Natural killer cell (primary cell): ENCODE measurements at regions of chr13 and their contacts with region 1.

Region 1: GRCh38 chr13:22717036-22717435 is 463.7 kb upstream of the SGCG start:
- DNase-seq: no peak
- ATAC-seq: no peak
- H3K4me3 ChIP-seq: no peak overlapping the region
- H3K4me3 Mint-ChIP-seq: no peak overlapping the region
- H3K27ac ChIP-seq: no peak overlapping the region
- H3K27ac Mint-ChIP-seq: no peak overlapping the region
- H3K4me1 ChIP-seq: no peaks in the 10 kb centered on the region
- H3K4me1 Mint-ChIP-seq: no peaks in the 10 kb centered on the region
- H3K27me3 ChIP-seq: no peaks in the 10 kb centered on the region
- H3K27me3 Mint-ChIP-seq: no peaks in the 10 kb centered on the region
- CTCF ChIP-seq: no peak

Region 2: DNA sequence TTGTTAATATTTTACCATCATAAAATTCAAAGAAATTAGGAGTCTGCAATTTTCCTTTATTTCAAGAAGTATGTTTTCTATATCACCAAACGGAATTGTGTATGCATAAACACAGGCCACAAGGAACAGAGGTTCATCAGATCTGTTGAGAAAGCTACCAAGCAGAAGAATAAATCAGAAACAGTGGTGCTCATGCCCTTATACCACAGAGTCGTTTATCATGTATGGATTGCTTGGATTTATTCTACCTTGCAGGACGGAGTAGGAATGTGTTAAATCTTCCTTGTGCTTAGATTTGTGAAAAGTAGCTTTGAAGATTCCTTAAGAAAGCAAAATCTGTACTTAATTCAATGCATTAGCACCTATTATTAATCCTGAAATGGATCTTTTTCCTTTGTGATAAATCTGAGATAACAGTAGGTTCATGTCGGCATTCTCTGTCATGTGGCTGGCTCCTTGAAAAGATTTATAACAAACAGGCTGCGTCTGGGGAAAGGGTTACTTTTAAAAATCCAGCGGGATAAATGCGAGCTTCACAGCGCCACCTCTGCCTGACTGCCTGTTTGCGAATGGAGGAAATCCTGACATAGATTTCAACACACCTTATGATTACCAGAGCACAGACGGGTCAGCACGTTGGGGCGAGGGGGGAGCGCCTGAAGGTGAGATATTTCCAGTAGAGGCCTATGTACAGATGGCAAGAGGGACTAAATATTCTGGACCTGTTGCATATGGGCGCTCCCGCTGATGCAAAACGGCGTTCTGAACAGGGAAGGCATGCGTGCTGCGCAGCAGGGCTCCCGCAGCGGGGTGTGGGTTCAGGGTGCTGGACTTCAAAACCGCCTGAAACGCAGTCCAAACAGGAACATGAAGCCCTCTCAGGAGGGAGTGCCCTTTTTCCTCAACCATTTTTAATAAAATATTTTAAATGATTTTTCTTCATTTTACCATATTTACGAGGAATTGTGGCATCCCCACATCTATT is 18.3 kb after region 1 on chr13:
- intact Hi-C with region 1: loop called (anchors 2 kb)
- DNase-seq: no peak
- ATAC-seq: no peak
- H3K4me3 ChIP-seq: no peak overlapping the region
- H3K4me3 Mint-ChIP-seq: no peak overlapping the region
- H3K27ac ChIP-seq: no peak overlapping the region
- H3K27ac Mint-ChIP-seq: no peak overlapping the region
- H3K4me1 ChIP-seq: no peaks in the 10 kb centered on the region
- H3K4me1 Mint-ChIP-seq: no peaks in the 10 kb centered on the region
- H3K27me3 ChIP-seq: no peaks in the 10 kb centered on the region
- H3K27me3 Mint-ChIP-seq: peaks cover 0 to 8% of the 10 kb centered on the region in 2 donors
- CTCF ChIP-seq: no peak